ENCODE measurements at regions of chr2 and their contacts with region 1.

Region 1: GRCh38 chr2:4221434-4221833 is 518.1 kb downstream of the DCDC2C start:
- DNase-seq: no peak
- H3K4me3 ChIP-seq: no peak overlapping the region
- H3K4me3 Mint-ChIP-seq: no peak overlapping the region
- H3K27ac Mint-ChIP-seq: no peak overlapping the region
- H3K4me1 ChIP-seq: no peaks in the 10 kb centered on the region
- H3K4me1 Mint-ChIP-seq: no peaks in the 10 kb centered on the region
- H3K27me3 ChIP-seq: no peaks in the 10 kb centered on the region
- H3K27me3 Mint-ChIP-seq: no peaks in the 10 kb centered on the region
- CTCF ChIP-seq: no peak

Region 2: GRCh38 chr2:4190526-4190925 is 30.9 kb before region 1 on chr2:
- CTCF ChIA-PET with region 1: no interaction called
- POLR2A ChIA-PET with region 1: no interaction called
- intact Hi-C with region 1: no loop called
- DNase-seq: no peak
- H3K4me3 ChIP-seq: no peak overlapping the region
- H3K4me3 Mint-ChIP-seq: no peak overlapping the region
- H3K27ac Mint-ChIP-seq: no peak overlapping the region
- H3K4me1 ChIP-seq: no peaks in the 10 kb centered on the region
- H3K4me1 Mint-ChIP-seq: no peaks in the 10 kb centered on the region
- H3K27me3 ChIP-seq: no peaks in the 10 kb centered on the region
- H3K27me3 Mint-ChIP-seq: no peaks in the 10 kb centered on the region
- CTCF ChIP-seq: no peak

Region 3: GRCh38 chr2:4291430-4291829 is 70.0 kb after region 1 on chr2:
- CTCF ChIA-PET with region 1: no interaction called
- POLR2A ChIA-PET with region 1: no interaction called
- intact Hi-C with region 1: loop called (anchors 5 kb)
- DNase-seq: no peak
- H3K4me3 ChIP-seq: no peak overlapping the region
- H3K4me3 Mint-ChIP-seq: no peak overlapping the region
- H3K27ac Mint-ChIP-seq: no peak overlapping the region
- H3K4me1 ChIP-seq: no peaks in the 10 kb centered on the region
- H3K4me1 Mint-ChIP-seq: no peaks in the 10 kb centered on the region
- H3K27me3 ChIP-seq: no peaks in the 10 kb centered on the region
- H3K27me3 Mint-ChIP-seq: peaks cover 4% of the 10 kb centered on the region
- CTCF ChIP-seq: no peak